ENCODE measurements at regions of chr13 and their contacts with region 1.

Region 1: DNA sequence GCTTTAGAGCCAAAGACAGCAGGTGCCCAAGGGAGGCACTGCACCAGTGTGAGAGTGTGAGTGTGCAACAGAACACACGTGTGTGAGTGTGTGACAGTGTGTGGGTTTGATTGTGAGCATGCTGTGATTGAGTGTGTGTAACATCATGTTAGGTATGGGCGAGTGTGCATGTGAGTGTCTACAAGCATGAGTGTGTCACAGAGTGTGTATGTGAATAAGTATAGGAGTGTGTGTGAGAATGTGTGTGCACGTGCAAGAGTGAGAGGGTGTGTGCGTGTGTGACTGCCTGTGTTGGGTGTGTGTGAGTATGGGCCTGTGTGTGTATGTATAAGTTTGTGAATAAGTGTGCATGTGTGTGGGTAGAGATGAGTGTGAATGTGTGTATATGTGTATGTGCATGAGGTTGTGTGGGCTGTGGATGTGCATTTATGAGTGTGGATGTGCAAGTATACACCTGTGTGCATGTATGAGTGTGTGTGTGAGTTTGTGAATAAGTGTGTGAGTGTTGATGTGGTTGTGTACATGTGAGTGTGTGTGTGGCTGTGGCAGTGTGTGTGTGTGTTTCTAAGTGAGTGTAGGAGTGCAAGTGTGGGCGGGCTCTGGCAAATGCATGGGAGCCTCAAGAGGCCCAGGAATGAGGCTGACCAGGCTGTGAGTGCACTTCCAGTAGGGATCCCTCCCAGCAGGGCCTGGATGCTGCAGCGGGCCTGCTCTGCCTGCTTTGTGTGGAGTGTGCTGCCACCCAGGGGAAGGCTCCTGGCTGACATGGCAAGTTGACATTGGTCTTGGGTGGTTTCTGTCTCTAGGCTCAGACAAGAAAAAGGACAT is 198.4 kb downstream of the COL4A1 start:
- DNase-seq: peak in 1 of 2 experiments; percentile 50
- H3K4me3 ChIP-seq: no peak overlapping the region
- H3K27ac ChIP-seq: no peak overlapping the region
- H3K4me1 ChIP-seq: peaks cover 2 to 13% (median 6%) of the 10 kb centered on the region in 4 experiments; a peak in 5 of 7 replicates
- H3K27me3 ChIP-seq: no peaks in the 10 kb centered on the region
- CTCF ChIP-seq: peak; percentile 80 to 86 (median 82)
- EP300 ChIP-seq: no peak
- POLR2A ChIP-seq: no peak
- RAD21 ChIP-seq: peak; percentile 93 to 94

Region 2: DNA sequence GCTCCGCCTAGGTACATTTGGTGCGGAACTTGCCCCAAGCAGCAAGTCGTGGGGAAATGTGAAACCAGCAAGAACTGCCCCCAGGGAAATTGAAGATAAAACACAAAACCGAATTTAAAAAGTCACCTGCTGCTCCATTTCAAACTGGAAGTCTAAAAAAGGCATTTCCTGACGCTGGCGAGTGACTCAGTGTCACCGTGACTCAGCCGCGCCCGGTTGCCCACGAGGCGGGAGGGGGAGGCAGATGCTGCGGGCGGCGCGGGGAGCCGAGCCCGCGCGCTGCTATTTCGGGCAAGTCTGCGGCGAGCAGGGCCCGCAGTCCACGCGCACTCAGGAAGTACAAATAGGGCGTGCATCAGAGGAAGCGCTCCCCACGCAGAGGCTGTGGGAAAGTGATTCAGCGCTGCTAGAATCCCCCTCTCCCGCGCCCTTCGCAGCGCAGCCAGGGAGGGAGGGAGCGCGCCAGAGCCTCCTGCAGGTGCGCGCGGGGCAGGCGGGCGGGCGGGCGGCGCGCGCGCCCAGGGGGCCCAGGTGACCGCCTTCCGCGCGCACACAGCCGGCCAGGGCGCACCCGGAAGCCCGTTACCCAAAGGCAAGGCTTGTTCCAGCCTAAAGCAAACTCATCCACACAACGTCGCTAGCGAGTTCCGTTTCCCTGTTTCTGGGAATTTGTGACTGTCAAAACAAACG is 29.6 kb after region 1 on chr13:
- CTCF ChIA-PET with region 1: interaction called, 15 read pairs
- POLR2A ChIA-PET with region 1: no interaction called
- DNase-seq: no peak
- H3K4me3 ChIP-seq: peak overlapping the region; percentile 48 to 78 (median 64)
- H3K27ac ChIP-seq: no peak overlapping the region
- H3K4me1 ChIP-seq: peaks cover 12 to 25% (median 22%) of the 10 kb centered on the region in 4 experiments
- H3K27me3 ChIP-seq: peaks cover 0 to 13% (median 7%) of the 10 kb centered on the region in 4 experiments; a peak in 5 of 7 replicates
- CTCF ChIP-seq: peak in 2 of 3 experiments; percentile 7 to 26; a peak in 2 of 4 replicates
- EP300 ChIP-seq: no peak
- POLR2A ChIP-seq: no peak
- RAD21 ChIP-seq: peak in 1 of 2 experiments; percentile 33; a peak in 2 of 4 replicates

Region 3: GRCh38 chr13:110209950-110210603 is 101.5 kb after region 1 on chr13:
- CTCF ChIA-PET with region 1: no interaction called
- POLR2A ChIA-PET with region 1: no interaction called
- DNase-seq: no peak
- H3K4me3 ChIP-seq: no peak overlapping the region
- H3K27ac ChIP-seq: no peak overlapping the region
- H3K4me1 ChIP-seq: peaks cover 0 to 2% (median 0%) of the 10 kb centered on the region in 4 experiments; a peak in 1 of 7 replicates
- H3K27me3 ChIP-seq: no peaks in the 10 kb centered on the region
- CTCF ChIP-seq: no peak
- EP300 ChIP-seq: no peak
- POLR2A ChIP-seq: no peak
- RAD21 ChIP-seq: no peak

Measured in H1 (cell line).